CD4-positive, alpha-beta memory T cell (primary cell): ENCODE measurements at regions of chr4 and their contacts with region 1.

Region 1: DNA sequence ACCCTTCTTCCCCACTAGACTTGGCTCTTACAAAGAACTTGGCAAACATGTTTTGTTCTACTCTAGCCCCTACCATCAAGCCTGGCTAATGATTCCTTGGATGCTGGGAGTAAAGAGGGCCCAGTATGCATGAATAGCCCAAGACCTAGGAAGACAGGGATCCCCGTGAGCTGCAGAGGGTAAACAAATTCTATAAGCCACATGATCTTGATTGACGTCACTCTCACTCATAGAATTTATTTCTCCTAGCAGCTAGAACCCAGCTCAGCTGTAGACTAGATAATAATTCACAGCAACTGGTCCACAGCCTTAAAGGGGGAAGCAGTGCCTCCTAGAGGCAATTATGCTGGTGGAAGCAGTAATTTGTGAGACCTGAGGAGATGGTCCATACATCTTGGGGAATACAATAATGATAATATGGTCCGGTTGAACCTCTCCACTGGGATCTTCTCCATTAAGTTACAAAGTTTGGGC is 16.1 kb upstream of the USO1 start:
- DNase-seq: peak; percentile 47 to 63 (median 49)
- H3K4me3 ChIP-seq: no peak overlapping the region
- H3K4me3 Mint-ChIP-seq: no peak overlapping the region
- H3K27ac ChIP-seq: no peak overlapping the region
- H3K27ac Mint-ChIP-seq: peak overlapping the region in 5 of 7 donors; percentile 43 to 69 (median 50)
- H3K4me1 ChIP-seq: no peaks in the 10 kb centered on the region
- H3K4me1 Mint-ChIP-seq: peaks cover 0 to 5% (median under 1%) of the 10 kb centered on the region in 4 donors
- H3K27me3 ChIP-seq: no peaks in the 10 kb centered on the region
- H3K27me3 Mint-ChIP-seq: no peaks in the 10 kb centered on the region

Region 2: DNA sequence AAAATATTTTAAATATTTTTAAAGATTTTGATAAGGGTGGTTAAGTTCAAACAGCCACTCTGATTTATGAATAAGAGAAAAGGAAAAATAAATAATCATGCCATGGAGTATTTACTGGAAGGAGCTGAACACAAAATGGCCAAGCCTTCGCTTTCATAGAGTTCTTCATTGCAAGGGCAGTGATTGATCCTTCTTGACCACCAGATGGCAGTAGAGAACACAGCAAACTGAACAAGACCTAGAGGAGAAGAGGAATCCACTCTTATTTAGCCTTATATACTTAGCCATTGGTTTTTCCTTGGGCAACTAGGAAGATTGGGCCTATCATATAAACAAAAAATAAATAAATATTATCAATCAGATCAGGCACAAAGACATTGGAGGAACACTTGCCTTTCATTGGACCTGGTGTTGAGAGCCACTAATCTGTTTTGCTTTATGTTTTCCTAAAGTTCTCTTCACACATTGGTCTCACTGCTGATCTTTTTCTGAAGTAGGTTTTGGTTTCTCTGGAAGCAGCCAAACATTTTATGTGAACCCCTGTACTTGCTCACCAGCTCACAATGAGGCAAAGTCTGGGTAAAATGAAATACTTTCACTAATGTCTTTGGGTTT is 833.4 kb before region 1 on chr4:
- CTCF ChIA-PET with region 1: no interaction called
- POLR2A ChIA-PET with region 1: no interaction called
- intact Hi-C with region 1: loop called (anchors 10 kb)
- DNase-seq: peak; percentile 33 to 43 (median 33)
- H3K4me3 ChIP-seq: no peak overlapping the region
- H3K4me3 Mint-ChIP-seq: no peak overlapping the region
- H3K27ac ChIP-seq: no peak overlapping the region
- H3K27ac Mint-ChIP-seq: no peak overlapping the region
- H3K4me1 ChIP-seq: no peaks in the 10 kb centered on the region
- H3K4me1 Mint-ChIP-seq: peaks cover 0 to 2% (median under 1%) of the 10 kb centered on the region in 4 donors
- H3K27me3 ChIP-seq: no peaks in the 10 kb centered on the region
- H3K27me3 Mint-ChIP-seq: peaks cover 2 to 6% of the 10 kb centered on the region in 2 donors

Region 3: GRCh38 chr4:75660491-75660890 is 47.8 kb before region 1 on chr4:
- CTCF ChIA-PET with region 1: no interaction called
- POLR2A ChIA-PET with region 1: no interaction called
- intact Hi-C with region 1: no loop called
- DNase-seq: no peak
- H3K4me3 ChIP-seq: no peak overlapping the region
- H3K4me3 Mint-ChIP-seq: no peak overlapping the region
- H3K27ac ChIP-seq: no peak overlapping the region
- H3K27ac Mint-ChIP-seq: peak overlapping the region in 3 of 7 donors; percentile 8 to 73 (median 24)
- H3K4me1 ChIP-seq: peaks cover 62% of the 10 kb centered on the region
- H3K4me1 Mint-ChIP-seq: peaks cover 36 to 67% (median 53%) of the 10 kb centered on the region in 4 donors
- H3K27me3 ChIP-seq: no peaks in the 10 kb centered on the region
- H3K27me3 Mint-ChIP-seq: no peaks in the 10 kb centered on the region